ENCODE measurements at regions of chr11 and their contacts with region 1.

Region 1: GRCh38 chr11:43282607-43283440 is 29.0 kb upstream of the API5 start:
- DNase-seq: peak; percentile 84
- H3K4me3 ChIP-seq: peak overlapping the region; percentile 8
- H3K27ac ChIP-seq: no peak overlapping the region
- H3K4me1 ChIP-seq: peaks cover 18% of the 10 kb centered on the region
- H3K27me3 ChIP-seq: no peaks in the 10 kb centered on the region
- CTCF ChIP-seq: peak; percentile 100

Region 2: DNA sequence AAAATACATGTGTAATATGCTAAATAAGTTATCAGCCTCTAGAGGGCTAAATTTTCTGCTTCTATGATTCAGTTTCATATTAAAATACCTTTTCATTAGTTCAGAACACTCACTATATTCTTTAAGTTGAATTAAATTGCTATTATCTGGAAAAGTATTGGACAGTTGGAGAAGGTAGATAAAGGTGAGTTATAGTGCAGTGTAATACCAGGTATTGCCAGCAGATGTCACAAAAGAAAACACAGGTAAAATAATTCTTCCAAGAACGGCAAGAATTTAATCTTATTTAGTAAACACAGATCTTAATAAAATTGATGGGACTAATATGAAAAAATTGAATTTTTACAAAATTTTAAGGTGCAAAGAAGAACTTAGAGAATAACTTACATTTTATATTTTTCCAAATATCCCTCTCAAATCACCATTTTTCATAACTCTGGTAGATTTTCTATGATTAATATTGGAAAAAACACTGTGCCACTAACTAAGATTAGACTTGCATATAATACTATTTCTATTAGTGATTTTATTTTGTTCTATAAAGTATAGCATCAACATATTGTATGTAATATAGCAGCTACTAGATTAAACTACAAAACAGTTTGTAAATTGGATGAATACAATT is 1821.7 kb before region 1 on chr11:
- CTCF ChIA-PET with region 1: no interaction called
- POLR2A ChIA-PET with region 1: no interaction called
- intact Hi-C with region 1: loop called (anchors 2 kb)
- DNase-seq: peak; percentile 40
- H3K4me3 ChIP-seq: no peak overlapping the region
- H3K27ac ChIP-seq: no peak overlapping the region
- H3K4me1 ChIP-seq: no peaks in the 10 kb centered on the region
- H3K27me3 ChIP-seq: peaks cover 39% of the 10 kb centered on the region
- CTCF ChIP-seq: peak; percentile 97

Region 3: DNA sequence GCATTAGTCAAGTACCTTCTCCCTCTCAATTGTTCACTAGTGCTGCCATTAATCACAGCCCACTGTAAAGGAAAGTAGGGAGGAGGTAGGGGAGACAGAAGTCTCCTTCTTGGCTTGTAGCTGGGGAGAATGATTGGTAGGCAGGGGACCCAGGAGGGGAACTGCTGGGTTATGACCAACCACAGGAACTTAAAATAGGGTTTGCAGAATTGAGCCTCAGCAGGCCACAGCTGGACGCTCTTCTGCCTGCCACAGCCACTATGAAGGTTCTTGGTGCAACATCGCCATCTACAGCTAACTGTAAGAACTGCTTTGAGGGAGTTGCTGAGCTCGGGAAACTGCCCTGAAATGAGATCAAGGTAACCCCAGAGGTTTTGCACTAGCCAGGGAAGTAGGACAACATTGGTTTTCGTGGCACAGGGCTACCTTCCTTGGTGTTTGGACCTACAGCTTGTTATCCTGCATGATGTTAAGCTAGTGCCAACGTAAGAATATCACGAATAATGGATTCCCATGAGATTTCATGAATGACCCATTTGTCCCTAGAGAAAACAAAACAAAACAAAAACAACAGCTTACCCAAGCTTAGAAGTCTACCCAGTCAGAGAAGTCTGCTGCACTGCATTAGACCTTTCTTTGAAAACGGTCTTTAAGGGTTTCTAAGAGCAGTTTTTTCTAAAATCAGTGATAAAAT is 758.1 kb before region 1 on chr11:
- CTCF ChIA-PET with region 1: interaction called, 5 read pairs
- POLR2A ChIA-PET with region 1: no interaction called
- intact Hi-C with region 1: loop called (anchors 2 kb)
- DNase-seq: peak; percentile 87
- H3K4me3 ChIP-seq: no peak overlapping the region
- H3K27ac ChIP-seq: no peak overlapping the region
- H3K4me1 ChIP-seq: no peaks in the 10 kb centered on the region
- H3K27me3 ChIP-seq: no peaks in the 10 kb centered on the region
- CTCF ChIP-seq: peak; percentile 99

Region 4: DNA sequence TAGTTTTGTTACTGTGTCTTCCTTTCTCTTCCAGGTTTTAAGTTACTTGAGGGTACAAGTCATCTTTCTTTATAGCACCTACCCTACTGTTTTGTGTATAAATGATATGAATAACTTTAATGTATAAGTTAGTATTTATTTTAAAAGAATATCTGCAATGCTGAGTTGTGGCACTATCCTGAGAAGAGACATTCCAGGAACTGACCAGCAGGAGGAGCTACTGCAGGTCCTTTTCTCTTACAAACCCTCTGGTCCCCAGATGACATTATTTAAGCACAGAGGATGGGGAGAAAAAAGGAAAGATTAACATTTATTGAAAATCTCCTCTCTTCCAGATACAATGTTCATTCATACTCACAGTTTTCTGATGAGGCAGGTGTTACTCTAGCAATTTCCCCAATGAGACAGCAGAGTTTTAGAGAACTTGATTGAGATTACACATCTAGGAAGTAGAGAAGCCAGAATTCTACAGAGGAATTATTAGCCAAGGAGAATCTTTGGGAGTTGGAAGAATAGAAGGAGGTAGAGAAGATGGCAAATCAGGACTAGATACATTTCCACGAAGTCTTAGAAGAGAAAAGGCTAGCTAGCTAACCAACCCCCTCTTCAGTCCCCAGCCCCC is 512.3 kb before region 1 on chr11:
- CTCF ChIA-PET with region 1: interaction called, 11 read pairs
- POLR2A ChIA-PET with region 1: no interaction called
- intact Hi-C with region 1: loop called (anchors 1 kb)
- DNase-seq: peak; percentile 78
- H3K4me3 ChIP-seq: no peak overlapping the region
- H3K27ac ChIP-seq: no peak overlapping the region
- H3K4me1 ChIP-seq: no peaks in the 10 kb centered on the region
- H3K27me3 ChIP-seq: no peaks in the 10 kb centered on the region
- CTCF ChIP-seq: peak; percentile 100

Region 5: DNA sequence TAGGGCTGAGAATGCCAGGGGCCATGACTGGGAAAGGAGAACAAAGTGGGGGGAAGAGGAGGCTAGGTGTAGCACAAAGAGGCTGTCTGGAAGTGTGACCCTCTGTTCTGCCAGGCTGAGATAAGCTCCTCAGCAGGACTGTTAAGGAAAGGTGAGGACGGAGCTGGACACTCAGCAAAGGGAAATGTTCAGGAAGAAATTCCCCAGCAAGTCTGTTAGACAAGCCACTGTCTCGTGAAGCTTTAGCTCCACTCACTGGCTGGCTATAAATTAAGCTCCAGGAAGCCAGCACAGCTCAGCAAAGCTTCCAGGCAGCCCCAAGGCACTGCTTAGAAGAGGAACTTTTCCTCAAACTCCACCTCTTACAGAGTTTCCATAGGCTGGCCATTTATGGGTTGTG is 152.2 kb before region 1 on chr11:
- CTCF ChIA-PET with region 1: interaction called, 6 read pairs
- POLR2A ChIA-PET with region 1: no interaction called
- intact Hi-C with region 1: loop called (anchors 2 kb)
- DNase-seq: peak; percentile 85
- H3K4me3 ChIP-seq: no peak overlapping the region
- H3K27ac ChIP-seq: peak overlapping the region; percentile 21
- H3K4me1 ChIP-seq: peaks cover 10% of the 10 kb centered on the region
- H3K27me3 ChIP-seq: no peaks in the 10 kb centered on the region
- CTCF ChIP-seq: peak; percentile 77

Region 6: DNA sequence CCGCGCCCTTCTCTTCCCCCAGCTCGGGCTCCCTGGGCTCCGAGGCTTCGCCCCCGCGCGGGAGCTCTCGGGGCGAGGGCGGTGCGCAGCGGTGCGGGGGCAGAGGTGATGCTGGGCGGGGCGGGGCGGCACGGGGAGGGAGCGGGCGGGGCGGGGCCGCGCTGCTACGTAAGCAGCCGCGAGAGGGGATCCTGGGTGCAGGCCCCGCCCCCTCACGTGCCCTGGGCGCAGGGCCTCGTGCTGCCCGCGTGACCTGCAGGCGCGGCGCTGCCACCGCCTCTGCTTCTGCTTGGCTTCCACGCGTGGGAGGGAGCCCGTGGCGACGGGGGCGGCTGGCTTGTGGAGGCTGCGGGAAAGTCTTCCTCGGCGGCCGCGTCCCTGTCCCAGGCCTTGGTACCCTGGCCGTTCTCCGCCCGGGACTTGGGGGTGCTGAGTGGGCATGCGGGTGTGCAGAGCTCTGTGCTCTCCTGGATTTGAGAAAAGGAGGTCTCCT is 265.1 kb after region 1 on chr11:
- CTCF ChIA-PET with region 1: no interaction called
- POLR2A ChIA-PET with region 1: no interaction called
- intact Hi-C with region 1: no loop called
- DNase-seq: peak; percentile 66
- H3K4me3 ChIP-seq: peak overlapping the region; percentile 20
- H3K27ac ChIP-seq: no peak overlapping the region
- H3K4me1 ChIP-seq: no peaks in the 10 kb centered on the region
- H3K27me3 ChIP-seq: peaks cover 24% of the 10 kb centered on the region
- CTCF ChIP-seq: no peak

Region 7: GRCh38 chr11:43712676-43713075 is 429.9 kb after region 1 on chr11:
- CTCF ChIA-PET with region 1: no interaction called
- POLR2A ChIA-PET with region 1: no interaction called
- intact Hi-C with region 1: no loop called
- DNase-seq: no peak
- H3K4me3 ChIP-seq: no peak overlapping the region
- H3K27ac ChIP-seq: no peak overlapping the region
- H3K4me1 ChIP-seq: no peaks in the 10 kb centered on the region
- H3K27me3 ChIP-seq: no peaks in the 10 kb centered on the region
- CTCF ChIP-seq: no peak